ENCODE measurements at regions of chr1 and their contacts with region 1.

Region 1: DNA sequence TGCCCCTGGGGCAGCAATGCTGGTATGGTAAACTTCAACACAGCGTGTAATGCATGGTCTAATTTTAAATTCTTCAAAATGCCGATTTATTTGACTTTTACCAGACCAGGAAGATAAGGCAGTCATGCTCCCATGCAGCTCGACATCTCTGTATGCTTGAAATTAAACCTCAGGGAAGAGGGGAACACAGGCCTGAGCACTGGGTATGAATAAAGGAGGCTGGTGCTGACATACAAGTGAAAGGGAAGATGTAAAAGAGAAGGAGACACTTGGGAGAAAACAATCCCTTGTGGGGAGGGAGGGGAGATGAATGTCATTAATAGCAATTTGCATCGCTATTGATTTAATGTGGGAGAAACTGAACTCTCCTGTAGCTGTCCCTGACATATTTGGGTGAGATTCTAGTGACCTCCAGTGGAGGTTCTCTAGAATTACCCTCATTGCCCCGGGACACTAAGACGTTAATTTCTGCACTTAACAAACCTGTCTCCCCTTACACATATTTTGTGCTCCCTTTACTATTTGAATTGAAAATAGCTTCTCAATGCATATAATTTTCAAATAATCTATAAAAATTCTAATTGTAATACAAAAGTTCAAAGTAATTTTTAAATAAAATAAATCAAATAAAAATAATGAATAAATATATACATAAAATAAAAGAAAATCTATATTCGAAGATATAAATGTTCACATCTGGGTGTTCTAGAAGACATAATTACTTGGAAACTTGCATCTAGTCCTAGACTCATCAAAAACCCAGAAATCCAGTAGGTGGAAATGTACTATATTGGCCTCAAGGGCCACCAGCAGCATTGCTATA is 283.1 kb downstream of the LMX1A start:
- DNase-seq: no peak

Region 2: GRCh38 chr1:163357378-163357777 is 1716.0 kb before region 1 on chr1:
- intact Hi-C with region 1: loop called in 1 of 2 experiments (anchors 5 kb)
- DNase-seq: no peak

Region 3: DNA sequence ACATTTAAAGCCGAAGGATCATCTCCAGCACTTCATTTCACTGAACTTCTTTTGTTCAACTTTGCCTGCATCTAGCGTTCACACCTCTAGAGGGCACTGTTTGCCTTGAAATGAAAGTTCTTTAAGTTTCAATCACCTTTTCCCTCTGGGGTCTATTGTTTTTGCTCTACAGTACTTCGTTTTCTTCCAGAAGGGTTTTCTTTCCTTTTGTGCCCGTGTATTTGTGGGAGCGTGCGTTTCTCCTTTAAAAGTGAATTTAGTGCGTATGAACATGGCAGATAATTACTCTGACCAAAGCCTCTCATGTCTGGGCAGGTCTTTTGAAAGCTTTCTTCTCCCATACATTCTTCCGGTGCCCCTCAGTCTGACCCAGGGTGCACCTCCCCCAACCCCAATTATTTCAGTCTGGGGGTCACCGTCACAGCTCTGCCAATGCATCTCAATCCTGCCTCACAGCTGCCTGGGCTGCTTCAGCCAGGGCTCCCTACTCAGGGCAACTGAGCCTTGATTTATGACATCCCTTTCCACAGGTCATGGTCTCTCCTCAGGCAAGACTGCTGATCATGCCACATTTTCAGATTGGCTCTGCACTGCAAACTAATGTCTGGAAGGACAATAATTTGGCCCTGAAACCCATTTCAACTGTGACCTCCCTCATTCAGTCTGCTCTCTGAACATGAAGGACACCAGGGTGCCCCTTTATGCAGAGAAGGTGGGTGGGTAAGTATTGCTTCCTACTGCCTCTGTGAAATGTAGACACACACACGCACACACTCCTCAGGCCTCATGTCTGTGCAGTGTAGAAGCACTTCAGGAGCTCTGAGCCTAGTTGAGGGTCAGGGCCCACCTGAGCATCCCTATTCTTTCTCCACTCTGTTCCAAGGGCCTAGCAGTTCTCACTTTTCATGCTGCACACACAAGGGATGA is 1663.1 kb before region 1 on chr1:
- intact Hi-C with region 1: loop called in 1 of 2 experiments (anchors 10 kb)
- DNase-seq: no peak

Region 4: GRCh38 chr1:163535807-163536206 is 1537.6 kb before region 1 on chr1:
- intact Hi-C with region 1: loop called (anchors 10 kb)
- DNase-seq: no peak

Region 5: DNA sequence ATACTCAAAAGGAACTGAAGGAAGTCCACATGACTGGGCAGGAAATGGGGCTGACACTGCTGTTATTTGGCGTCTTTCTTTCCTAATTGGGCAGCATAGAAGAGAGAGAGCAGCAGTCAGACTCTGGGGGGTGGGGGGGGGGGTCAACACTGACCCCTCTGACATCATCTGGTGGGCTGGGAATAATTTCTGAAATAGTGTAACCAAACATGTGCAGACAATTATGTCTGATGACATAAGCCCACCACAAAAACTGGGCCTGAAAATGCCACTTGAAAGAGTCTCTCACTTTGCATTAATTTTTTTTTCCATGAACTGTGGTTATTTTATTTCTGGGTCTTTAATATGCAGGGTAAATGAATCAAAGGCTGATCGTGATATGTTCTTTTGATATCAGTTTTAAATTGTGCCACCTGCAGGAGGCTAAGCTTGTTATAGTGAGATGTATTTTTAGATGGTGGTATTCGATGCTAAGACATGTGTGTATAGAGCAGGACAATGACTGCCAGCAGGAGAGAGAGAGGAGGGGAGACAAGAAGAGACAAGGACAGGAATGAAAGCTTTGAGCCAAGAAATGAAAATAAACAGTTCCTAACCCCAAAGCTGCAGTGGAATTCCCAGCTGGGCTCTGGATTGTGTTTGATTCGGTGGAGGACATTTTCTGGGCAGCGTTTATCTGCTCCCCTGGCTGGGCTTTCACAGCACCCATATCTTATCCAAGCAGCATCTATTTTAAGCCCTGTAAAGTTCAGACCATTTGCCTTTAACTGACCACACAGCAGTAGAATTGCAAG is 249.7 kb before region 1 on chr1:
- intact Hi-C with region 1: no loop called
- DNase-seq: no peak

Region 6: DNA sequence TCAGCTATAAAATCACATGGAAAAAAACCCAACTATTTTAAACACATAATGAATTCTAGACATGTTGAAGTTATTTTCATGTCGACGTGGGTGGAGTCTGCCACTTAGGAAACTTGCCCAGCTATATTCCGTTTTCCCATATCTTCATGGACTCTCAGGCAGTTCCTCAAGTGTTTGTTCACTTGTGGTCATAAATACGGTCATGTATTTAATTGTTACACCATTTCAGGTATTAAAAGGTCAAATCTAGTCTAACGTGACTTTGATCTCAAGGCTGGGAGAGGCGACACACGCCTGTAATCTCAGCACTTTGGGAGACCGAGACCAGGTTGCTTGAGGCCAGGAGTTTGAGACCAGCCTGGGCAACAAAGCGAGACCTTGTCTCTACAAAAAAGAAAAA is 167.5 kb before region 1 on chr1:
- intact Hi-C with region 1: no loop called
- DNase-seq: no peak

Region 7: GRCh38 chr1:165060285-165060793 is 13.1 kb before region 1 on chr1:
- intact Hi-C with region 1: loop called in 1 of 2 experiments (anchors 1 kb)
- DNase-seq: no peak

Region 8: DNA sequence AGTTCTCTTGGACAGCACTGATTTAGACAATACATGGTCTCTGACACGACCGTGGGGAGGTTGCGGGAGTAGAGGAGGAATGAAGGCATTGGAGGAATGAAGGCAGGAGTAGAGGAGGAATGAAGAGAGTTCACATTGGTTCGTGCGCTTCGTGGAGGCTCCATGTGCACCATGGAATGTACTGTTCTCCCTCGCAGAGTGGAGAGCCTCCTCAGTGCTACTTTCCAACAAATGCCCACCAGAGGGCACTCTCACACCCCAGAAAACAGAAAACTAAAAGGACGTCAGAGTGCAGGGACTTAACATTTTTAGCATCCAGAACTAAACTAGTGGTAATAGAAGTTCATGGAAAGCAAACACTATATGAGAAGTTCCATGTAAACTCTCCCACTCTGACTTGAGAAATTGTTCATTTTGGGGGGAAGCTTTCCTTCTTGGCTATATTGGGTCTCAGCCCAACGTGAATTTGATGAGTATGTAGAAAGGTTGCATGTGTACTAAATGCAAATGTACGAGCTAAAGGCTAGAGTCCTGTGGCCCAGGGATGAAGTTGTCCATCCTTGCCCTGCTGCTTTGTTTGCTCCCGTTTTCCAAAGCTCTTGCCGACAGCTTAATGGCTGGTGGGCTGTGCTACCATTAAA is 71.5 kb after region 1 on chr1:
- intact Hi-C with region 1: no loop called
- DNase-seq: no peak